Caco-2 (cell line): ENCODE measurements at regions of chr15 and their contacts with region 1.

Region 1: GRCh38 chr15:60128000-60128376 is 123.9 kb downstream of the FOXB1 start:
- DNase-seq: no peak
- H3K4me3 ChIP-seq: peak overlapping the region; percentile 9
- H3K4me3 Mint-ChIP-seq: peak overlapping the region; percentile 68
- H3K27ac Mint-ChIP-seq: no peak overlapping the region
- H3K4me1 ChIP-seq: peaks cover 4% of the 10 kb centered on the region; the same call in 1 of the 2 replicates
- H3K4me1 Mint-ChIP-seq: no peaks in the 10 kb centered on the region
- H3K27me3 ChIP-seq: no peaks in the 10 kb centered on the region
- H3K27me3 Mint-ChIP-seq: peaks cover 10% of the 10 kb centered on the region
- CTCF ChIP-seq: no peak

Region 2: GRCh38 chr15:59380904-59381610 is 746.9 kb before region 1 on chr15:
- CTCF ChIA-PET with region 1: no interaction called
- POLR2A ChIA-PET with region 1: interaction called, 21 read pairs
- intact Hi-C with region 1: no loop called
- DNase-seq: peak; percentile 89 to 94
- H3K4me3 ChIP-seq: no peak overlapping the region
- H3K4me3 Mint-ChIP-seq: peak overlapping the region; percentile 60
- H3K27ac Mint-ChIP-seq: peak overlapping the region; percentile 91
- H3K4me1 ChIP-seq: peaks cover 40% of the 10 kb centered on the region
- H3K4me1 Mint-ChIP-seq: peaks cover 7% of the 10 kb centered on the region
- H3K27me3 ChIP-seq: no peaks in the 10 kb centered on the region
- H3K27me3 Mint-ChIP-seq: no peaks in the 10 kb centered on the region
- CTCF ChIP-seq: no peak

Region 3: GRCh38 chr15:59917504-59918157 is 210.4 kb before region 1 on chr15:
- CTCF ChIA-PET with region 1: interaction called, 7 read pairs
- POLR2A ChIA-PET with region 1: no interaction called
- intact Hi-C with region 1: loop called (anchors 1 kb)
- DNase-seq: peak; percentile 76 to 84
- H3K4me3 ChIP-seq: no peak overlapping the region
- H3K4me3 Mint-ChIP-seq: no peak overlapping the region
- H3K27ac Mint-ChIP-seq: no peak overlapping the region
- H3K4me1 ChIP-seq: no peaks in the 10 kb centered on the region
- H3K4me1 Mint-ChIP-seq: no peaks in the 10 kb centered on the region
- H3K27me3 ChIP-seq: no peaks in the 10 kb centered on the region
- H3K27me3 Mint-ChIP-seq: peaks cover 17% of the 10 kb centered on the region
- CTCF ChIP-seq: peak; percentile 39 to 60

Region 4: DNA sequence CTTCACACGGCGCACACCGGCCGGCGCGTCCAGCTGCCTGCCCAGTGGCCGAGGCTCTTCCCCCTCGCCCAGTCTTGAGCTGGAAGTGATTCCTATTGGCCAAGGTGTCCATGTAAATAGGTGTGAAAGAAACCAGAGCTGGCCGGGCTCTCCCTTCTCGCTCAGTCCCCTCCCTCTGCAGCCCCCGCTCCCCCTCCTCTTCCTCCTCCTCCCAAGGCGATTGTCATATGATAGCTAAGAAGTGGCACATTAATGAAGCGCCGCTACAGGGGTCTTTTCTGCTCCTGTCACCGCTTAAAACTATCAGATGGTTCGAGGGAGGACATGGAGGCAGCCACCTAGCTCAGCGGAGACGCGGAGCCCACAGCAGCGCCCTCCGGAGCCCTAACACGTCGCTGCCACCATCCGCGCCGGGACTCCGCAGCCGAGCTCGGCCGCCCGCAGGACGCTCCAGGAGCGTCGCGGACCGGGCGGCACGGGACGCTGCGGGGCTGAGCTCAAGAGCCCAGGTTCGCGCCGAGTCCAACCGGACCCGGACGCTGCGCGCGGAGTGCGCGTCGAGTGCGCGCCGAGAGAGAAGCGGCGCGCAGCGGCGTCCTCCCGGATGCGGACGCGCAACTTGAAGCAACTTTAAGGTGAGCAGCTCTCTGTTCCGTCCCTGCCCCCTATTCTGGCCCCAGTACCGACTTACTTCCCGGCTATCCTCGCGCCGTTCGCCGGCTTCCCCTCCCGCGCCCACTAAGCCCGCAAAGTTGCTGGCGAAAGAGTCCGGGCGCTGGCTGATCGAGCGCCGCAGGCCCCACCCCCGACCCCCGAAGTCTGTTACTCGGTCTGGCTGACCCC is 123.8 kb before region 1 on chr15 and contains the start of gene FOXB1:
- CTCF ChIA-PET with region 1: no interaction called
- POLR2A ChIA-PET with region 1: no interaction called
- intact Hi-C with region 1: loop called (anchors 5 kb)
- DNase-seq: peak in 1 of 2 experiments; percentile 23
- H3K4me3 ChIP-seq: peak within 1 kb of the TSS; percentile 24
- H3K4me3 Mint-ChIP-seq: peak within 1 kb of the TSS; percentile 73
- H3K27ac Mint-ChIP-seq: no peak within 1 kb of the TSS
- H3K4me1 ChIP-seq: peaks cover 15% of the 10 kb centered on the region
- H3K4me1 Mint-ChIP-seq: peaks cover 8% of the 10 kb centered on the region
- H3K27me3 ChIP-seq: peaks cover 10% of the 10 kb centered on the region
- H3K27me3 Mint-ChIP-seq: peaks cover 45% of the 10 kb centered on the region
- CTCF ChIP-seq: no peak
- total RNA-seq, gene FOXB1: not detected in 2 replicates

Region 5: GRCh38 chr15:60091165-60091564 is 36.8 kb before region 1 on chr15:
- CTCF ChIA-PET with region 1: interaction called, 3 read pairs
- POLR2A ChIA-PET with region 1: no interaction called
- intact Hi-C with region 1: loop called (anchors 2 kb)
- DNase-seq: peak; percentile 78 to 83
- H3K4me3 ChIP-seq: no peak overlapping the region
- H3K4me3 Mint-ChIP-seq: no peak overlapping the region
- H3K27ac Mint-ChIP-seq: peak overlapping the region; percentile 40
- H3K4me1 ChIP-seq: peaks cover 30% of the 10 kb centered on the region
- H3K4me1 Mint-ChIP-seq: peaks cover 16% of the 10 kb centered on the region
- H3K27me3 ChIP-seq: no peaks in the 10 kb centered on the region
- H3K27me3 Mint-ChIP-seq: no peaks in the 10 kb centered on the region
- CTCF ChIP-seq: no peak